A549 (cell line): ENCODE measurements at regions of chr20 and their contacts with region 1.

Region 1: GRCh38 chr20:45362804-45363610 is at the start of gene SYS1:
- DNase-seq: peak; percentile 95 to 98
- ATAC-seq: peak; percentile 94 to 95
- H3K4me3 ChIP-seq: peak within 1 kb of the TSS; percentile 64
- H3K27ac ChIP-seq: peak within 1 kb of the TSS; percentile 95 to 97
- H3K4me1 ChIP-seq: peaks cover 27% of the 10 kb centered on the region; the same call in 2 of the 3 replicates
- CTCF ChIP-seq: peak; percentile 92
- EP300 ChIP-seq: no peak
- POLR2A ChIP-seq: peak; percentile 69
- RAD21 ChIP-seq: peak; percentile 85 to 87
- polyA plus RNA-seq, gene SYS1: 27.6 and 30.5 TPM in 2 replicates

Region 2: GRCh38 chr20:45337367-45338120 is 25.5 kb before region 1 on chr20:
- CTCF ChIA-PET with region 1: interaction called, 82 read pairs
- POLR2A ChIA-PET with region 1: interaction called, 10 read pairs
- DNase-seq: peak in 1 of 2 experiments; percentile 59
- ATAC-seq: peak; percentile 41 to 63
- H3K4me3 ChIP-seq: peak overlapping the region; percentile 0; the same call in 1 of the 3 replicates
- H3K27ac ChIP-seq: peak overlapping the region; percentile 84 to 96
- H3K4me1 ChIP-seq: peaks cover 75% of the 10 kb centered on the region
- CTCF ChIP-seq: no peak
- EP300 ChIP-seq: 0 out of 5 replicates have a peak, but pooled peaks of 1 of the 2 experiments have one; percentile 21
- POLR2A ChIP-seq: no peak
- RAD21 ChIP-seq: no peak

Region 3: DNA sequence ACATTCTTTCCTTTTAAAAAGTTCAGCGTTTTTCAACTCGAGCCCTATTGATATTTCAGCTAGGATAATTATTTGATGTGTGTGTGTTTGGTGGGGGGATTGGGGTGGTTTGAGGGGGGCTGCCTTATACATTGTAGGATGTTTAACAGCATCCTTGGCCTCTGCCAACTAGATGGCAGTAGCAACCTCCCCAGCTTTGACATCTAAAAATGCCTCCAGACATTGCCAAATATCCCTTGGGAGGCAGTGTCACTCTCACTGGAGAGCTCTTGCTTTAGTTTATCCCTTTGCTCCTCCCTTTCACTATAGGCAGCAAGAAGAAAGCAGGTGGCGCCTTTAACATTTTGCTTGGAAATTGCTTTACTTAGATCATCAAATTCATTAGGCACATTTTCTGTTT is 29.7 kb after region 1 on chr20:
- CTCF ChIA-PET with region 1: interaction called, 13 read pairs
- POLR2A ChIA-PET with region 1: no interaction called
- DNase-seq: no peak
- ATAC-seq: no peak; a peak in 1 of 6 replicates
- H3K4me3 ChIP-seq: no peak overlapping the region
- H3K27ac ChIP-seq: no peak overlapping the region
- H3K4me1 ChIP-seq: no peaks in the 10 kb centered on the region
- CTCF ChIP-seq: peak; percentile 21; the same call in 1 of the 3 replicates
- EP300 ChIP-seq: no peak
- POLR2A ChIP-seq: no peak
- RAD21 ChIP-seq: 0 out of 5 replicates have a peak, but pooled peaks have one; percentile 13 to 20

Region 4: DNA sequence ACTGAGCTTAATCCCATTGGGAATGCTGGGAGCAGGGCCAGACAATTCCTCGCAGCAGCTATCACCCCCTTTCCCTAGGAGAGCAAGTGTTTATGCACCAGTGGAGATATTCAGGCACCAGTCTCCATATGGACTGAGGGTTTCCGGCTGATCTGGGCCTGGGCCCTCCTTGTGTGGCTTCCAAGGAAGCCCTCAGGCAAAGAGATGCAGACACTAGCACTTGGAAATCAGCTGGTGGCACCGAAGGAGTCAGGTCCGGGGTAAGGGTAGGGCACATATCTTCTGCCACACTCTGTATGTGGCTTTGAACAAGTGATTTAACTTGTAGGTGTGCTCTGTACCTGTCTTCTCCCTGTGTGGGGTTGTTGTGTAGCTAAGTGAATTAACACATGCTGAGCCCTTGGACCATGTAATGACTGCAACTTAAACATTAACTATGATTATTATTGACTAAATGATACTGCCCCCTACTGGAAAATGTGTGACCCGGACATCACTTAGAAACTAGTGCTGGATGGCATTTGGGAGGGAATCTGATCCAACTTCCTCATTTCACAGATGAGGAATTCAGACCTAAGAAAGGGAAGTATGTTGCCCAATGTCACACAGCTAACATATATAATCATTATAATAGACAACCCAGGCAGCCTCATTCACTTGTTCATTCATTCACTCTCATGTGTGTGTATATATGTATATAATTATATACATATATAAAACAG is 87.3 kb after region 1 on chr20:
- CTCF ChIA-PET with region 1: interaction called, 111 read pairs
- POLR2A ChIA-PET with region 1: no interaction called
- DNase-seq: peak; percentile 28 to 56
- ATAC-seq: peak in 1 of 2 experiments; percentile 56; a peak in 3 of 6 replicates
- H3K4me3 ChIP-seq: no peak overlapping the region
- H3K27ac ChIP-seq: no peak overlapping the region
- H3K4me1 ChIP-seq: no peaks in the 10 kb centered on the region
- CTCF ChIP-seq: peak; percentile 62
- EP300 ChIP-seq: no peak
- POLR2A ChIP-seq: no peak
- RAD21 ChIP-seq: peak; percentile 37 to 51

Region 5: GRCh38 chr20:45487231-45487635 is 124.2 kb after region 1 on chr20:
- CTCF ChIA-PET with region 1: interaction called, 10 read pairs
- POLR2A ChIA-PET with region 1: no interaction called
- DNase-seq: peak in 1 of 2 experiments; percentile 20
- ATAC-seq: peak; percentile 50 to 68; a peak in 4 of 6 replicates
- H3K4me3 ChIP-seq: no peak overlapping the region
- H3K27ac ChIP-seq: no peak overlapping the region
- H3K4me1 ChIP-seq: no peaks in the 10 kb centered on the region
- CTCF ChIP-seq: 0 out of 3 replicates have a peak, but pooled peaks have one; percentile 9
- EP300 ChIP-seq: no peak
- POLR2A ChIP-seq: no peak
- RAD21 ChIP-seq: no peak